PC-9 (cell line): ENCODE measurements at regions of chr6 and their contacts with region 1.

Region 1: DNA sequence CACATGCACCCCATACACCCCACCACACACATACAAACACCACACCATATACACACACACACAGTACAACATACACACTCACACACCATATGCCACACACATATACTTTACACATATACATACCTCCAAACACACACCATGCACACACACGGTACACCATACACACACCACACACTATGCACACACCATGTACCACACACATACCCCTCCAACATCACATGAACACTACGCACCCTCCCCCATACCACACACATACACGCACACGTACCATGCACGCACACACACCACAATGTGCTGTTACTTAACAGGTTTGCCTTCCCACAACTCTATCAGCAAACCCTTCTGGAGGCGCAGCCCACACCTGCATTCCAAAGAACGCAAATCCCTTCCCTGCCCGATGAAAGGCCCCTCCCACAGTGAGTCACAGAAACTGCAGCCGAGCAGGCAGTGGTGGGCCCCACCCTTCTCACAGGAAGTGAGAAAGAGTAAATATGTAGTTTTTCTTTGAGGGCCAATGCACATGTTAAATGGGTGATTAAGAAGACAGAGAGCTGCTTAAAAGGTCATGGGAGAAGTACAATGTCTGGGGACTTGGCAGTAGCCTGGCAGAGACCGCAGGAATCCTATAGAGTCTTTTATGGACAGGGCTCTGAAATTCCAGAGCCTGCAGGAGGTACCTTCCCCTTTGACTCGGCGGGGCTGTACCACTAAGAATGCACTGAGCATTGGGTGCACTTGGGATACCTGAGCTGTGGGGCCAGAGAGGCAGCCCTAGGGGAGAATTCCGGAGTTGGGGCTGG is 34.1 kb upstream of the EZR start:
- DNase-seq: peak; percentile 92 to 100
- H3K4me3 ChIP-seq: peak overlapping the region; percentile 51
- H3K27ac ChIP-seq: peak overlapping the region; percentile 99
- H3K4me1 ChIP-seq: peaks cover 93% of the 10 kb centered on the region
- H3K27me3 ChIP-seq: no peaks in the 10 kb centered on the region
- CTCF ChIP-seq: no peak

Region 2: DNA sequence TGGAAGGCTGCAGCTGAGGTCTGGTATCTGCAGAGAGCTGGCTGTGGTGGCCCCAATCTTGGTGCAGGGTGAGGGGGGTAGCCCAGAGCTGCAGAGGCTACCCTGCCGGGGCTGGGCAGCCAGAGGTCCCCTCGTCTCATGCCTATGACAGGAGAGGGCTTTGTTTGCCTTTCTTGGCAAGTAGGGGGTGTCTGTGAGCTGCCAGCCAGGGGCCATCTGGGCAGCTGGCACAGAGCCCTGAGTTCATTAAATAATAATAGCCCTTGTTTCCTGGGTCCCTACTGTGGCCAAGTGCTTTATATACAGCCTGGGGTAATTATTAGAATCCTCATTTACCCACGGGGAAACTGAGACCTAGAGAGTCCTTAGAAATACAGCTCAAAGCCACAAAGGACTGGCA is 100.7 kb before region 1 on chr6:
- CTCF ChIA-PET with region 1: no interaction called
- POLR2A ChIA-PET with region 1: no interaction called
- intact Hi-C with region 1: no loop called
- DNase-seq: peak in 1 of 2 experiments; percentile 29
- H3K4me3 ChIP-seq: no peak overlapping the region
- H3K27ac ChIP-seq: no peak overlapping the region
- H3K4me1 ChIP-seq: no peaks in the 10 kb centered on the region
- H3K27me3 ChIP-seq: no peaks in the 10 kb centered on the region
- CTCF ChIP-seq: no peak

Region 3: GRCh38 chr6:158835616-158836221 is 17.6 kb before region 1 on chr6:
- CTCF ChIA-PET with region 1: no interaction called
- POLR2A ChIA-PET with region 1: no interaction called
- intact Hi-C with region 1: loop called (anchors 1 kb)
- DNase-seq: peak; percentile 80 to 94
- H3K4me3 ChIP-seq: peak overlapping the region; percentile 54
- H3K27ac ChIP-seq: peak overlapping the region; percentile 87
- H3K4me1 ChIP-seq: peaks cover 56% of the 10 kb centered on the region
- H3K27me3 ChIP-seq: no peaks in the 10 kb centered on the region
- CTCF ChIP-seq: no peak

Region 4: GRCh38 chr6:158972241-158973233 is 119.3 kb after region 1 on chr6:
- CTCF ChIA-PET with region 1: interaction called, 3 read pairs
- POLR2A ChIA-PET with region 1: interaction called, 3 read pairs
- intact Hi-C with region 1: loop called (anchors 1 kb)
- DNase-seq: peak; percentile 4 to 60
- H3K4me3 ChIP-seq: no peak overlapping the region
- H3K27ac ChIP-seq: peak overlapping the region; percentile 42
- H3K4me1 ChIP-seq: peaks cover 6% of the 10 kb centered on the region
- H3K27me3 ChIP-seq: no peaks in the 10 kb centered on the region
- CTCF ChIP-seq: peak; percentile 82